Activated CD4-positive, alpha-beta T cell treated with anti-CD3 and anti-CD28 coated beads for 36 hours (primary cell): ENCODE measurements at regions of chr5 and their contacts with region 1.

Region 1: DNA sequence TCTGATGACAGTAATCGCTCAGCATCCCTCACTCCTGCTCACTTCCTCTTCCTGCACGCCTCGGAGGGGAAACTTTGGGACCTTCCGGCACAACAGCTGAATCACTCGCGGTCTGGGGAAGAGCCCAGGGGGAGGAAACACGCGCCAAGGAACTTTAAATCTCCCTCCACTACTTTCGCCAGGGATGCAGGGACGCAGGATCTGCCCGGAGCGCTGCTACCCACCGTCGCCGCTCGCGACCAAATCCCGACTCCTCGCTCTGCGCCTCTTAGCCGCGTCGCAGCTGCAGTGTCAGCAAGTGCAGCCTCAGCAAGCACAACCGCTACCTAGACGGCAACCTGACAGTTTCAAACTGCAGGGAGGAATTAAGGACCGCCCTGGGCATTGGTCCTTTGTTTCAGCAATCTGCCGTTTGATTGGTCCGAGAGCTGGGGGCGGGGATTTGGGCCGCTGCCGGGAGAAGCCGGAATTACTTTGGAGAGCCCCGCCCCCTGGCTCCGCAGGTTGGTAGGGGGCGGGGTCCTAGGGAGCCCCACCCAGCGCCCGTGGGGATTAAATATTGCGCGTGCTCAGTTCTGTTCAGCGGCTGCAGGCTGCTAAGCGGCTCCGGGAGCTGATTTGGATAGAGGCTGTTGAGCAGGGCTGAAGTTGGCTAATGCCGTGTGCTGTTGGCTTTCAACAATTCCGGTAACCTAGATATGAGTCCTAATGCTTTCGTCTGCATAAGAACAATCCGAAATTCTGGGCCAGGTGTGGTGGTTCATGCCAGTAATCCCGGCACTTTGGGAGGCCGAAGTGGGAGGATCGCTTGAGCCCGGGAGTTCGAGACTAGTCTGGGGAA is at the start of gene POC5:
- DNase-seq: peak; percentile 99
- ATAC-seq: peak; percentile 94
- H3K4me3 Mint-ChIP-seq: peak within 1 kb of the TSS; percentile 97
- H3K27ac Mint-ChIP-seq: peak within 1 kb of the TSS; percentile 99
- H3K4me1 Mint-ChIP-seq: peaks cover 32% of the 10 kb centered on the region
- H3K27me3 Mint-ChIP-seq: no peaks in the 10 kb centered on the region
- total RNA-seq, gene POC5: 20.2 to 20.3 TPM

Region 2: GRCh38 chr5:74766849-74767578 is 950.3 kb before region 1 on chr5 and contains the starts of genes GFM2 and NSA2:
- CTCF ChIA-PET with region 1: no interaction called
- POLR2A ChIA-PET with region 1: no interaction called
- intact Hi-C with region 1: loop called (anchors 1 to 10 kb)
- DNase-seq: peak; percentile 95
- ATAC-seq: peak; percentile 85
- H3K4me3 Mint-ChIP-seq: peak within 1 kb of the TSS; percentile 94
- H3K27ac Mint-ChIP-seq: peak within 1 kb of the TSS; percentile 99
- H3K4me1 Mint-ChIP-seq: peaks cover 34% of the 10 kb centered on the region
- H3K27me3 Mint-ChIP-seq: no peaks in the 10 kb centered on the region
- total RNA-seq, gene GFM2: 34.7 to 40.4 TPM
- total RNA-seq, gene NSA2: 163 to 253 TPM

Region 3: GRCh38 chr5:75236322-75237316 is 480.7 kb before region 1 on chr5 and contains the start of gene ANKRD31:
- CTCF ChIA-PET with region 1: interaction called, 3 read pairs
- POLR2A ChIA-PET with region 1: no interaction called
- intact Hi-C with region 1: loop called (anchors 1 kb)
- DNase-seq: peak; percentile 94
- ATAC-seq: peak; percentile 97
- H3K4me3 Mint-ChIP-seq: peak within 1 kb of the TSS; percentile 87
- H3K27ac Mint-ChIP-seq: peak within 1 kb of the TSS; percentile 96
- H3K4me1 Mint-ChIP-seq: peaks cover 8% of the 10 kb centered on the region
- H3K27me3 Mint-ChIP-seq: no peaks in the 10 kb centered on the region
- total RNA-seq, gene ANKRD31: 0.66 to 0.67 TPM

Region 4: GRCh38 chr5:75511435-75512384 is 205.6 kb before region 1 on chr5 and contains the starts of genes CERT1 and POLK:
- CTCF ChIA-PET with region 1: no interaction called
- POLR2A ChIA-PET with region 1: interaction called, 3 read pairs
- intact Hi-C with region 1: loop called (anchors 1 kb)
- DNase-seq: peak; percentile 98
- ATAC-seq: peak; percentile 96
- H3K4me3 Mint-ChIP-seq: peak within 1 kb of the TSS; percentile 98
- H3K27ac Mint-ChIP-seq: peak within 1 kb of the TSS; percentile 96
- H3K4me1 Mint-ChIP-seq: peaks cover 47% of the 10 kb centered on the region
- H3K27me3 Mint-ChIP-seq: no peaks in the 10 kb centered on the region
- total RNA-seq, gene CERT1: 21.6 to 24.5 TPM
- total RNA-seq, gene POLK: 35.5 to 49.1 TPM

Region 5: DNA sequence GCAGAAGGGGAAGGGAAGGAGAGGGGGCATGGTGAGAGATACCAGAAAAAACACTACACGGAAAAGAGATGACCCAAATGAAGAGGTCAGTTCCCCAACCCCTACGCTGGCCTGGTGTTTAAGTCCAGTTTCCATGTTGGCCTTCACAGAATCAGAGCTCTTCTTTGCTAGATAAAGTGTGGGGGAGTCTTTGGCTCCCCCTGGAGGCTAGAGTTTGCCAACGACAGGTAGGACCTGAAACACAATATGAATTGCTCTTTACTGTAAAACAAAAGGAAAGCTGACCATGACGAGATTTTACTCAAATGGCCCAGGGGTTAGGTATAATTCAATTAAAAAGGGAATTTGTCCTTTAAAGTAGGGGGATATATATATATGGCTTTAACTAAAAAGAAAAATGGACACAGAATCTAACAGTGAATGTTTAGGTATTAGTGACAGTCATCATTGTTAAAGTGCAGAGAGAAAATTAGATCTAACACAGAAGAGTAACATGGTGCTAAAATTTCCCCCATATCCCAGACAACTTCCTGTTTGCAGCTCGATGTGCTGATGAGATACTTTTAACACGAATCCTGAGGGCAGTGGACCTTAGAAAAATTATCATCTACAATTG is 457.9 kb after region 1 on chr5:
- CTCF ChIA-PET with region 1: no interaction called
- POLR2A ChIA-PET with region 1: no interaction called
- intact Hi-C with region 1: loop called in 1 of 2 experiments (anchors 10 kb)
- DNase-seq: peak; percentile 74
- ATAC-seq: no peak
- H3K4me3 Mint-ChIP-seq: no peak overlapping the region
- H3K27ac Mint-ChIP-seq: no peak overlapping the region
- H3K4me1 Mint-ChIP-seq: peaks cover 32% of the 10 kb centered on the region
- H3K27me3 Mint-ChIP-seq: no peaks in the 10 kb centered on the region

Region 6: DNA sequence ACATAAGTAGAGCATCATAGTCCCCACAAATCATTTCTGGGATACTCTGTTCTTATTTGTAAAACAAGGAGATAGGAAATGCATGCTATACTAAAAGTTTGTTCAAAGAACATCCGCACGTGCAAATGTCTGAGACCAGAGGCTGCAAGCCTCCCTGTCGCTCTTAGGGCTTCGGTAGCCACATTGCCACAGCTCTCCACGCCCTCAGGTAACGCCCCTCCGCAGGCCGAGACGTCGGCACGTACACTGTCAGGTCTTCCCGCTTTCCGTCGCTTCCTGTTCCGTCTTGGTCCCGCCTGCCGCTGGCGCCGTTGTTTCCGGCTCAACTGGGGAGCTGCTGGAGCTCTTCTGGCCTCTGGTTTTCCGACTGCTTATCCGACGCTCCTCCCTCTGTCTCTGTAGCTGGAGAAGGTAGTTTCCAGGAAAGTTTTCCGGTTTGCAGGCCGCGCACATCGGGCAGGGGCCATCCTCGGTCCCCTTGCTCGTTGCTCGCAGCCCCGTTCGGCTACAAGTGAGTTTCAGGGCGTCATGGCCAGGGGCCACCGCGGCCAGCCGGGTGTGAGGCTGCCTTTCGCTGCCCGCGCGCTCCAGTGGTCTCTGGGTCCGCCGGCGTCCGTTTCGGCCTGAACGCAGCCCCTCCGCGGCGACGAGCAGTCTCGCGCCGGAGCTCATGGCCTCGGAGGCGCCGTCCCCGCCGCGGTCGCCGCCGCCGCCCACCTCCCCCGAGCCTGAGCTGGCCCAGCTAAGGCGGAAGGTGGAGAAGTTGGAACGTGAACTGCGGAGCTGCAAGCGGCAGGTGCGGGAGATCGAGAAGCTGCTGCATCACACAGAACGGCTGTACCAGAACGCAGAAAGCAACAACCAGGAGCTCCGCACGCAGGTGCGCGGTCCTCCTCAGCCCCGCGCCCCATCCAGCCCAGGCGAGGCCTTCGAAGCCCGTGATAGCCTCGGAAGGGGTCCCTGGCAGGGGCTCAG is 1313.1 kb after region 1 on chr5 and contains the start of gene AGGF1:
- CTCF ChIA-PET with region 1: no interaction called
- POLR2A ChIA-PET with region 1: no interaction called
- intact Hi-C with region 1: loop called in 1 of 2 experiments (anchors 5 kb)
- DNase-seq: peak; percentile 96
- ATAC-seq: peak; percentile 98
- H3K4me3 Mint-ChIP-seq: peak within 1 kb of the TSS; percentile 87
- H3K27ac Mint-ChIP-seq: peak within 1 kb of the TSS; percentile 94
- H3K4me1 Mint-ChIP-seq: peaks cover 30% of the 10 kb centered on the region
- H3K27me3 Mint-ChIP-seq: no peaks in the 10 kb centered on the region
- total RNA-seq, gene AGGF1: 25.5 to 33.2 TPM